Prostate gland (tissue), 2 donors: ENCODE measurements at regions of chr17 and their contacts with region 1.

Region 1: GRCh38 chr17:47789611-47790561 is 31.7 kb downstream of the OSBPL7 start:
- DNase-seq: no peak
- H3K4me3 ChIP-seq: peak overlapping the region; percentile 7 to 24
- H3K27ac ChIP-seq: no peak overlapping the region
- H3K4me1 ChIP-seq: peaks cover 3% of the 10 kb centered on the region
- H3K27me3 ChIP-seq: peaks cover 10% of the 10 kb centered on the region
- CTCF ChIP-seq: peak in 2 of 4 experiments; percentile 37 to 41
- POLR2A ChIP-seq: no peak

Region 2: DNA sequence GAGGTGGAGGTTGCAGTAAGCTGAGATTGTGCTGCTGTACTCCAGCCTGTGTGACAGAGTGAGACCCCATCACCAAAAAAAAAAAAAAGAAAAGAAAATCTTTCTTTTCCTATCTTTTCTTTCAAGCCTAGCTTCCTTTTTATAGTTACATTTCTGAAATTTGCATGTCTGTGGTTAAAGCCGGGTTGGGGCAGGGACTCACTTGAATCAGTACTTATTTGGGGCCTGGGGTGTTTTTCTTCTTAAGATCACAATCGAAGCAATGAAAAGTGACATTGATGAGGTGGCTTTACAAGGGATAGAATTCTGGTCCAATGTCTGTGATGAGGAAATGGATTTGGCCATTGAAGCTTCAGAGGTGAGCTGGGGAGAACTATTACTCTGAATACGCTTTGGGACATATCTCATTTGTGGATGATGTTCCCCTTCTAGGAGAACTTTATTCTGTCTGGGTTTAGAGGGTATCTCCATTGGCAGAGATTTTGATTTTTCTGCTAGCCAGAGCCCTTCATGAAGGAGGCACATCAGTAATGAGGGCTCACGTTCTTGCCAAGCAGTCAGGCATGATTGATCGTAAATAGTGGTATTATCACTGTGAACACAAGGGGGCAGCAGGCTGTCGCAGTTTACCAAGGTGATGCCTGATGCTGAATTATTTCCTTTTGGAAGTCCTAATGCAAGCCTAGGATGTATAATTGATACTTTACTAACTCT is 125.8 kb before region 1 on chr17:
- intact Hi-C with region 1: loop called (anchors 5 kb)
- DNase-seq: peak; percentile 51
- H3K4me3 ChIP-seq: no peak overlapping the region
- H3K27ac ChIP-seq: no peak overlapping the region
- H3K4me1 ChIP-seq: no peaks in the 10 kb centered on the region
- H3K27me3 ChIP-seq: no peaks in the 10 kb centered on the region
- CTCF ChIP-seq: peak; percentile 38 to 71 (median 63)
- POLR2A ChIP-seq: no peak